ENCODE measurements at regions of chr1 and their contacts with region 1.

Region 1: DNA sequence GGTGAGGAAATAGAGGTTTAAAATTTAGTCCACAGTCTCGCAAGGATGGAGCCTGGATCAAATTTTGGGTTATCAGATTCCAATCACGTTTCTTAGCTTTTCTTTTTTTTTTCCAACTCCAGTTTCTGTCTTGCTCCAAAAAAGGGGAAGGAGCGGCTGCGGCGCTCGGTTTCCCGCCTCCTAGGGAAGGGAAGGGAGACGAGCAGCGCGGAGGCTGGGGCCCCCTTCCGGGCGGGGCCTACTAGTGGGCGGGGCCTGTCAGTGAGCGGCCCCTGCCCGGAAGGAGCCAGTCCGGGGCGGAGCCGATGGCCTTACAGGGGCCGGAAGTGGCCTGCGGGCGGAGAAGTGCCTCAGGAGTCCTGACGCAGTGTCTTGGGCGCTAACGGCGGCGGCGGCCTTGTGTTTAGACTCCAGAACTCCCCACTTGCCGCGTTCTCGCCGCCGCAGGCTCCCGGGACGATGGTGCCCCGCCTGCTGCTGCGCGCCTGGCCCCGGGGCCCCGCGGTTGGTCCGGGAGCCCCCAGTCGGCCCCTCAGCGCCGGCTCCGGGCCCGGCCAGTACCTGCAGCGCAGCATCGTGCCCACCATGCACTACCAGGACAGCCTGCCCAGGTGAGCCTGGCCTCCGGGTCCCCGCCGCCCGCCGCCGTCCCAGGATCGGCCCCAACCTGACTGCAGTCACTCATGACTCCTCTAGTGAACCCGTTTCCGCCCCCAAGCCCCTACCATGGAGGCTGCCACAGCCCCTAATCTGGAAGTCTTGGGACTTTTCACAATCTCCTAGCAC is at the start of gene CPT2:
- DNase-seq: peak; percentile 90
- H3K4me3 Mint-ChIP-seq: peak within 1 kb of the TSS; percentile 89
- H3K27ac Mint-ChIP-seq: peak within 1 kb of the TSS; percentile 90
- H3K4me1 Mint-ChIP-seq: peaks cover 22% of the 10 kb centered on the region
- H3K27me3 Mint-ChIP-seq: no peaks in the 10 kb centered on the region
- total RNA-seq, gene CPT2: 23.3 and 25.3 TPM in 2 replicates

Region 2: DNA sequence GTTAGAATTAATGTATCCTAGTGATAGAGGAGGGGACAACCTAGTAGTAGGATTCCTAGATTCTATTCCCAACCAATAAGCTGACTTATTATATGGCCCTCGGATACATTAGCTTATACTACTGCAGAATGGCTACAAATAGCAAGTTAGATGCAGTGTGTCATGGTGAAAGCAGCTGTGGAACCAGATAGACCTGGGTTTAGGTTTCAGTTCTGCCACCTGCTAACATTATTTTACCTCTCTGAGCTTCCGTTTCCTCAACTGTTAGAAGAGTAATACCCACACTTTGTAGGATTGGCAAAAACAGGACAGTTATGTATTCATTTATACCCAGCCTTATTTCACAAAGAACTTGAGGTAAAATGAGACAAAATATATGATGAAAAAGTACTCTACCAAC is 63.3 kb after region 1 on chr1:
- intact Hi-C with region 1: loop called (anchors 10 kb)
- DNase-seq: no peak
- H3K4me3 Mint-ChIP-seq: no peak overlapping the region
- H3K27ac Mint-ChIP-seq: no peak overlapping the region
- H3K4me1 Mint-ChIP-seq: no peaks in the 10 kb centered on the region
- H3K27me3 Mint-ChIP-seq: no peaks in the 10 kb centered on the region